Left cardiac atrium (tissue), 4 donors: ENCODE measurements at regions of chr1 and their contacts with region 1.

Region 1: GRCh38 chr1:207997486-207998268 is 86.8 kb upstream of the CD34 start:
- DNase-seq: peak; percentile 88
- ATAC-seq: peak; percentile 88 to 92

Region 2: GRCh38 chr1:207751790-207752455 is 245.8 kb before region 1 on chr1 and contains the start of gene CD46:
- intact Hi-C with region 1: no loop called
- DNase-seq: peak; percentile 98
- ATAC-seq: peak; percentile 99
- total RNA-seq, gene CD46: 108 to 110 TPM

Region 3: DNA sequence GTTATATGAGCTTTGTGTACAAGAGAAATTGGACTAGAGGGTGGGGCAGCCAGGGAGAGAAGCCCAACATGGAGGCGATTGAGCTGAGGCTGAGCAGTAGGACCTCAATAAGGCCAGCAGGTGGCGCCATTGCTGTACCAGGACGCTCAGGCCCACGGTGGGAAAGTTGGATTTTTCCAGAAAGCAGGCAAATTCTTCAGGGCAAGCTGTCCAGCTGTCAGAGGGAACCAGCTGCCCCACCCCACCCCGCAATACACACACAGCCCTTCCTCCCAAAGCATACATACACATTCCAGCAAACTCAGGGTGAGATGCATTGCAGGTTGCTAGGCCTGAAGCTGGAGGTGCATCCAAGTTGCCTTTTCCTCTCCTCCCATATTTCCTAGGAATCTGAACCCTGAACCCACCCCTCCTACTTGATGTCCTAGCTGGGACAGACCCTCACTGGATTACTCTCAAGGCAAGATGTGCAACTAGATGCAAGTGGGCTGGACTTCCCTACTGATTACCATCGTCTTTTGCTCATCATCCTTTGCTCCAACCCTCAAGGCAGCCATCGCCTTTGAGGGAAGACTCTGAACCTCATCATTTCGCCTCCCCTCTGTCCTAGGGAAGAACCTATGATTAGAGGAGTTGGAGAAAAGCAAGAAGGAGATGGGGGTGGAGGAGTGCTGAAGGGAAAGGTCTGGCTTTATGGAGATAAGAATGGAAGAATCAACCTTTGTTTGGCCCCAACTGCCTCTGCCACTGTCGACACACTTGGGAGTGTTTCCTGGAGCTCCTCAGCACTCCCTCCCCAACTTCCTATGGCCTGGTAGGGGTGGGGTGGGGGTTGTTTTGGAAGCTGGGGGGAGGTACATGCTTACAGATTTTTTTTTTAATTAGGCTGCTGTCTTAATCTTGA is 112.3 kb before region 1 on chr1:
- intact Hi-C with region 1: loop called in 1 of 2 experiments (anchors 10 kb)
- DNase-seq: peak; percentile 91
- ATAC-seq: peak; percentile 89 to 91